Left ventricle myocardium superior (tissue), 1 donor: ENCODE measurements at regions of chr7 and their contacts with region 1.

Region 1: DNA sequence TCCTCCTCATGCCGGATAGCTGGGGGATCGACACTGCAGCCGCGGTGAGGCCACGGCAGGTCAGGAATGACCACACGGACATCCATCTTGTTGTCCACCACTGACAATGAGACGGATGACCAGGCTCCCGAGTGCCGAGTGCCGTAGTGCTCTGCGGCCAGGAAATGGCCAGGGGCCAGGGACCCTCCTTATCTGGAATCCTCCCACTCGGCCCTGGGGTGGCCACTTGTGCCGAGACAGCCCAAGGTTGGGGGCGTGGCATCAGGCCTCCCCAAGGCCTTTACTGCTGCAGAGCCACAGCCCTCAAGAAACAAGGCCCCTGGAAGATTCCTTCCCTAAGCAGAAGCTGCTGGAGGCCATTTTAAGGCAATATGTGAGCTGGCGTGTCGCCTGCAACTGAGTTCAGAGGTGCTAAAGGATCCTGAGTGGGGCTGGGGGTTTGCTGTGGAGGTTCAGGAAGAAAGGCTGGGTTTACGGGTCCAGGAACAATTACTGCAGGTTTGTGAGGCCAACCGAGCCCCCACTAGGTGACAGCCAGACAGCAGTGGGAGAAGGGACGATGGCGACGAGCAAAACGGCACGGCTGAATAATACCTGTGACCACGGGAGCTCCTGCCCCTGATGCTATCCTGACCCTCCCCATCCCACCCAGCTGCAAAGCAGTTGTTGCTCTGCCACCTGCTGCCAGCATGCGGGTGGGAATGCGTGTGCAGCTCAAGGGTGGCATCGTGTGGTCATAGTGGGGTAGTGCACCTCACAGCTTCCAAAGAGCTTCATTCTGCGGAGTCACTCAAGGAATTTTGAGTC is 31.6 kb upstream of the LEP start:
- DNase-seq: peak; percentile 69
- ATAC-seq: peak; percentile 93

Region 2: DNA sequence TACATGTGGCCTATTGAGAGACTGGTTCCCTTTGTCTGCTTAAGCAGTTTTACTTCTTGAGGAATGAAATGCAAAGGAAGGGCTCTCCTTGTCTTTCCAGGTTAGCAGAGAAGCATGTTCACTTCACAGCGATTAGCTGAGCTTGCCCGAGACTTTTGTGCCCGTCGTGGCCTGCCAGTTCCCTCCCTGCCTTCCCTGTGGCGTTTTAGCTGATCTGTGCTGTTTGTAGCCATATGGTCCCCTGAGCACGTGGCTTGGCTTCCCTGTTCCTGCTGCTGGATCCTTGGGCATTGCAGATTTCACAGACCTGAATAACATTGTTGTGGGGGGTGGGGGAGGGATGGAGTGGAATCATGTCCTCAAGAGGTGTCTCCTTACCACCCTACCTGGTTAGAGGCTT is 495.7 kb before region 1 on chr7:
- intact Hi-C with region 1: loop called (anchors 5 kb)
- DNase-seq: no peak
- ATAC-seq: no peak